ENCODE measurements at regions of chr7 and their contacts with region 1.

Region 1: GRCh38 chr7:87312215-87312865 is 33.1 kb upstream of the CROT start:
- DNase-seq: peak; percentile 89
- H3K4me3 Mint-ChIP-seq: no peak overlapping the region
- H3K27ac Mint-ChIP-seq: no peak overlapping the region
- H3K4me1 Mint-ChIP-seq: peaks cover 3% of the 10 kb centered on the region
- H3K27me3 Mint-ChIP-seq: peaks cover 14% of the 10 kb centered on the region

Region 2: GRCh38 chr7:87345166-87345927 is 33.0 kb after region 1 on chr7 and contains the start of gene CROT:
- intact Hi-C with region 1: loop called (anchors 2 kb)
- DNase-seq: peak; percentile 99
- H3K4me3 Mint-ChIP-seq: peak within 1 kb of the TSS; percentile 97
- H3K27ac Mint-ChIP-seq: peak within 1 kb of the TSS; percentile 95
- H3K4me1 Mint-ChIP-seq: peaks cover 46% of the 10 kb centered on the region
- H3K27me3 Mint-ChIP-seq: no peaks in the 10 kb centered on the region
- total RNA-seq, gene CROT: 6.2 and 7.1 TPM in 2 replicates

Region 3: GRCh38 chr7:87416682-87417587 is 104.6 kb after region 1 on chr7:
- intact Hi-C with region 1: loop called (anchors 1 kb)
- DNase-seq: peak; percentile 91
- H3K4me3 Mint-ChIP-seq: no peak overlapping the region
- H3K27ac Mint-ChIP-seq: no peak overlapping the region
- H3K4me1 Mint-ChIP-seq: no peaks in the 10 kb centered on the region
- H3K27me3 Mint-ChIP-seq: peaks cover 5% of the 10 kb centered on the region